K562 (cell line): ENCODE measurements at regions of chr6 and their contacts with region 1.

Region 1: DNA sequence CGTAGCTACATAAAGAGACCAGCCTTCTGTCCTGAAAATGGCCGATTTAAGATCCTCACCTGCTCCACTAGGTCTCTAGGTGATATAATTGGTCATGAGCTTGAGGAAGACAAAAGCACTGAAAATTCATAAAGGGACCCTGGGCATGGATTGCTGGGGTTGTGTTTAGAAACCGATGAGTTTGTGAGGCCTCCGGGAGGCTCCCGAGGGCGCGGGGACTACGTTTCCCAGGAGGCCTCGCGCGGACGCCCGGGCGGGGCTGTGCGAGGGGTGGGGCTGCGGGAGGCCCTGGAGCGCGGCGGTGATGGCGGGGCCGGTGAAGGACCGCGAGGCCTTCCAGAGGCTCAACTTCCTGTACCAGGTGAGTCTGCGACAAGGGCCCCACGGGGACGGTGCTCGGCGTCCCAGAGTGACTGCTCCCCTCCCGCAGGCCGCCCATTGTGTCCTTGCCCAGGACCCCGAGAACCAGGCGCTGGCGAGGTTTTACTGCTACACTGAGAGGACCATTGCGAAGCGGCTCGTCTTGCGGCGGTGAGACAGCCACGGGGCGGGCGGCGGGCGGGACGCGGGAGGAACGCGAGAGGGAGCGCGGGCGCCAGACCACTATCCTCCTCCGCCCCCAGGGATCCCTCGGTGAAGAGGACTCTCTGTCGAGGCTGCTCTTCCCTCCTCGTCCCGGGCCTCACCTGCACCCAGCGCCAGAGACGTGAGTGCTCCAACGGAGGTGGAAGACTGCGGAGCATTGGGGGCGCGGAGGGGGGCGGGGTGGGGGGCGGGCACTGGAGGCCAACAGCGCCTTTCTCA is at the start of gene RPP21:
- DNase-seq: peak; percentile 94 to 98 (median 96)
- ATAC-seq: peak; percentile 96
- H3K4me3 ChIP-seq: peak within 1 kb of the TSS; percentile 82
- H3K27ac ChIP-seq: peak within 1 kb of the TSS; percentile 84
- H3K4me1 ChIP-seq: peaks cover 41 to 49% of the 10 kb centered on the region in 2 experiments
- H3K27me3 ChIP-seq: no peaks in the 10 kb centered on the region
- CTCF ChIP-seq: no peak
- EP300 ChIP-seq: no peak
- POLR2A ChIP-seq: peak; percentile 97
- RAD21 ChIP-seq: 0 out of 4 replicates have a peak, but pooled peaks of 1 of the 2 experiments have one; percentile 6
- polyA plus RNA-seq, gene RPP21: 201 to 246 TPM

Region 2: GRCh38 chr6:30066577-30067459 is 278.3 kb before region 1 on chr6 and contains the start of gene PPP1R11:
- CTCF ChIA-PET with region 1: no interaction called
- POLR2A ChIA-PET with region 1: interaction called, 3 read pairs
- in situ Hi-C with region 1: no loop called
- intact Hi-C with region 1: loop called (anchors 10 kb)
- DNase-seq: peak; percentile 95 to 100 (median 96)
- ATAC-seq: peak; percentile 99
- H3K4me3 ChIP-seq: peak within 1 kb of the TSS; percentile 71
- H3K27ac ChIP-seq: peak within 1 kb of the TSS; percentile 88
- H3K4me1 ChIP-seq: peaks cover 7% of the 10 kb centered on the region in 2 experiments; a peak in 4 of 5 replicates
- H3K27me3 ChIP-seq: no peaks in the 10 kb centered on the region
- CTCF ChIP-seq: no peak; a peak in 1 of 6 replicates
- EP300 ChIP-seq: peak; percentile 57; the same call in 1 of the 2 replicates
- POLR2A ChIP-seq: peak; percentile 93
- RAD21 ChIP-seq: no peak
- polyA plus RNA-seq, gene PPP1R11: 17.8 to 30.9 TPM

Region 3: GRCh38 chr6:30326526-30327260 is 18.4 kb before region 1 on chr6 and contains the start of gene TRIM39:
- CTCF ChIA-PET with region 1: interaction called, 3 read pairs
- POLR2A ChIA-PET with region 1: interaction called, 15 read pairs
- in situ Hi-C with region 1: no loop called
- intact Hi-C with region 1: loop called (anchors 1 kb)
- DNase-seq: peak; percentile 91 to 94 (median 92)
- ATAC-seq: peak; percentile 82
- H3K4me3 ChIP-seq: peak within 1 kb of the TSS; percentile 84
- H3K27ac ChIP-seq: peak within 1 kb of the TSS; percentile 92
- H3K4me1 ChIP-seq: peaks cover 22 to 38% of the 10 kb centered on the region in 2 experiments
- H3K27me3 ChIP-seq: no peaks in the 10 kb centered on the region
- CTCF ChIP-seq: peak in 1 of 3 experiments; percentile 39; a peak in 1 of 6 replicates
- EP300 ChIP-seq: no peak
- POLR2A ChIP-seq: peak; percentile 90
- RAD21 ChIP-seq: no peak; a peak in 1 of 4 replicates
- polyA plus RNA-seq, gene TRIM39: 5.6 to 5.8 TPM

Region 4: DNA sequence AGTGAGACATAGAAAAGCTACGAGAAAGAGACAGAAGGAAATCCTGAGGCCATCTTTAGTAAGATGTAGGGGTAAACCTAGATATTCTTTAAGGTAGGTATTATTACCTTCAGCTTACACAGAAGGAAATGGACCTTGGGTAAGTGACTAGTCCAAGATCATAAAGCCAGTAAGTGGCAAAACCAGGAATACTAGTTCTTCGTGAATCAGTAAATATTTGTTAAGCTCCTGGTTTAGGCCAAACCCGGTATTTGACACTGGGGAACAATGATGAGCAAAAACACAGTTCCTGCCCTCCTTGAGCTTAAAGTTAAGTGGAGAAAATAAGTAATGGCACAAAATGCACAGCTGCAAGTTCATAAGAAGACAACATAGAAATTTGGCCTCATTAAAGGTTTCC is 13.1 kb before region 1 on chr6:
- CTCF ChIA-PET with region 1: interaction called, 3 read pairs
- POLR2A ChIA-PET with region 1: interaction called, 15 read pairs
- in situ Hi-C with region 1: no loop called
- intact Hi-C with region 1: no loop called
- DNase-seq: no peak
- ATAC-seq: no peak
- H3K4me3 ChIP-seq: no peak overlapping the region
- H3K27ac ChIP-seq: no peak overlapping the region
- H3K4me1 ChIP-seq: peaks cover 3 to 12% of the 10 kb centered on the region in 2 experiments
- H3K27me3 ChIP-seq: no peaks in the 10 kb centered on the region
- CTCF ChIP-seq: no peak
- EP300 ChIP-seq: no peak
- POLR2A ChIP-seq: no peak
- RAD21 ChIP-seq: no peak